Naive thymus-derived CD4-positive, alpha-beta T cell (primary cell): ENCODE measurements at regions of chr5 and their contacts with region 1.

Region 1: GRCh38 chr5:172078726-172079345 is 72.4 kb upstream of the FBXW11 start:
- DNase-seq: no peak
- ATAC-seq: peak; percentile 43
- H3K4me3 ChIP-seq: no peak overlapping the region
- H3K4me3 Mint-ChIP-seq: peak overlapping the region in 8 of 10 donors; percentile 1 to 74 (median 46)
- H3K27ac ChIP-seq: peak overlapping the region; percentile 51
- H3K27ac Mint-ChIP-seq: peak overlapping the region; percentile 65 to 94 (median 83)
- H3K4me1 ChIP-seq: peaks cover 0 to 7% of the 10 kb centered on the region in 2 donors
- H3K4me1 Mint-ChIP-seq: peaks cover 13 to 42% (median 21%) of the 10 kb centered on the region in 7 donors
- H3K27me3 ChIP-seq: no peaks in the 10 kb centered on the region
- H3K27me3 Mint-ChIP-seq: no peaks in the 10 kb centered on the region

Region 2: GRCh38 chr5:171709918-171710317 is 368.9 kb before region 1 on chr5:
- CTCF ChIA-PET with region 1: no interaction called
- POLR2A ChIA-PET with region 1: no interaction called
- intact Hi-C with region 1: no loop called
- DNase-seq: no peak
- ATAC-seq: no peak
- H3K4me3 ChIP-seq: no peak overlapping the region
- H3K4me3 Mint-ChIP-seq: no peak overlapping the region
- H3K27ac ChIP-seq: no peak overlapping the region
- H3K27ac Mint-ChIP-seq: no peak overlapping the region
- H3K4me1 ChIP-seq: no peaks in the 10 kb centered on the region
- H3K4me1 Mint-ChIP-seq: no peaks in the 10 kb centered on the region
- H3K27me3 ChIP-seq: no peaks in the 10 kb centered on the region
- H3K27me3 Mint-ChIP-seq: peaks cover 0 to 16% (median 10%) of the 10 kb centered on the region in 5 donors

Region 3: GRCh38 chr5:171770153-171770552 is 308.7 kb before region 1 on chr5:
- CTCF ChIA-PET with region 1: no interaction called
- POLR2A ChIA-PET with region 1: no interaction called
- intact Hi-C with region 1: no loop called
- DNase-seq: no peak
- ATAC-seq: peak; percentile 58
- H3K4me3 ChIP-seq: no peak overlapping the region
- H3K4me3 Mint-ChIP-seq: no peak overlapping the region
- H3K27ac ChIP-seq: no peak overlapping the region
- H3K27ac Mint-ChIP-seq: no peak overlapping the region
- H3K4me1 ChIP-seq: no peaks in the 10 kb centered on the region
- H3K4me1 Mint-ChIP-seq: no peaks in the 10 kb centered on the region
- H3K27me3 ChIP-seq: peaks cover 0 to 2% of the 10 kb centered on the region in 2 donors
- H3K27me3 Mint-ChIP-seq: peaks cover 5 to 33% (median 20%) of the 10 kb centered on the region in 5 donors

Region 4: GRCh38 chr5:172028167-172028566 is 50.7 kb before region 1 on chr5:
- CTCF ChIA-PET with region 1: no interaction called
- POLR2A ChIA-PET with region 1: no interaction called
- intact Hi-C with region 1: no loop called
- DNase-seq: no peak
- ATAC-seq: no peak
- H3K4me3 ChIP-seq: no peak overlapping the region
- H3K4me3 Mint-ChIP-seq: no peak overlapping the region
- H3K27ac ChIP-seq: no peak overlapping the region
- H3K27ac Mint-ChIP-seq: no peak overlapping the region
- H3K4me1 ChIP-seq: no peaks in the 10 kb centered on the region
- H3K4me1 Mint-ChIP-seq: peaks cover 0 to 6% (median 0%) of the 10 kb centered on the region in 7 donors
- H3K27me3 ChIP-seq: no peaks in the 10 kb centered on the region
- H3K27me3 Mint-ChIP-seq: no peaks in the 10 kb centered on the region

Region 5: DNA sequence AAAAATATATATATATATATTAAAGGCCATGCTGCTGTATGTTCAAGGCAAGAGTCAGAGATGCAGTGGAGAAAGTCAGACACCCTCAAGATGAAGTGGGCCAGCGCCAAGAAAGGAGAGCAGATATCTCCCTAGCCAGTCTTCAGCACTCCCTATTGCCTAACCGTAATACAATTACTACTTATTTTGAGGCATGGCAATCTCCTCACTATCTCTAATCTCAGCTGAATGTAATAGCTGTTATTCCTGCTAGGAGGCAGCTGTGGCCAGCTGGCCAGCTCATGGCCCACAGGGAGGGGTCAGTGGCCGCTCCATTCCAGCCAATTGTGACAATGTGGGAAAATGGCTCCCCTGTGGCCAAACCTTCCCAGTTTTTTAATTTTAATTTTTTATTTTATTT is 15.1 kb after region 1 on chr5:
- CTCF ChIA-PET with region 1: no interaction called
- POLR2A ChIA-PET with region 1: interaction called, 3 read pairs
- intact Hi-C with region 1: loop called in 1 of 2 experiments (anchors 2 kb)
- DNase-seq: no peak
- ATAC-seq: no peak
- H3K4me3 ChIP-seq: no peak overlapping the region
- H3K4me3 Mint-ChIP-seq: no peak overlapping the region
- H3K27ac ChIP-seq: no peak overlapping the region
- H3K27ac Mint-ChIP-seq: peak overlapping the region in 4 of 9 donors; percentile 5 to 59 (median 20)
- H3K4me1 ChIP-seq: no peaks in the 10 kb centered on the region
- H3K4me1 Mint-ChIP-seq: peaks cover 10 to 18% (median 15%) of the 10 kb centered on the region in 7 donors
- H3K27me3 ChIP-seq: no peaks in the 10 kb centered on the region
- H3K27me3 Mint-ChIP-seq: no peaks in the 10 kb centered on the region